Mammary epithelial cell (primary cell): ENCODE measurements at regions of chr17 and their contacts with region 1.

Region 1: GRCh38 chr17:49952209-49952911 is 16.6 kb upstream of the DLX4 start:
- DNase-seq: peak; percentile 66
- H3K4me3 ChIP-seq: no peak overlapping the region
- H3K27ac ChIP-seq: no peak overlapping the region
- H3K4me1 ChIP-seq: no peaks in the 10 kb centered on the region
- H3K27me3 ChIP-seq: peaks cover 4% of the 10 kb centered on the region
- CTCF ChIP-seq: peak; percentile 97 to 99

Region 2: DNA sequence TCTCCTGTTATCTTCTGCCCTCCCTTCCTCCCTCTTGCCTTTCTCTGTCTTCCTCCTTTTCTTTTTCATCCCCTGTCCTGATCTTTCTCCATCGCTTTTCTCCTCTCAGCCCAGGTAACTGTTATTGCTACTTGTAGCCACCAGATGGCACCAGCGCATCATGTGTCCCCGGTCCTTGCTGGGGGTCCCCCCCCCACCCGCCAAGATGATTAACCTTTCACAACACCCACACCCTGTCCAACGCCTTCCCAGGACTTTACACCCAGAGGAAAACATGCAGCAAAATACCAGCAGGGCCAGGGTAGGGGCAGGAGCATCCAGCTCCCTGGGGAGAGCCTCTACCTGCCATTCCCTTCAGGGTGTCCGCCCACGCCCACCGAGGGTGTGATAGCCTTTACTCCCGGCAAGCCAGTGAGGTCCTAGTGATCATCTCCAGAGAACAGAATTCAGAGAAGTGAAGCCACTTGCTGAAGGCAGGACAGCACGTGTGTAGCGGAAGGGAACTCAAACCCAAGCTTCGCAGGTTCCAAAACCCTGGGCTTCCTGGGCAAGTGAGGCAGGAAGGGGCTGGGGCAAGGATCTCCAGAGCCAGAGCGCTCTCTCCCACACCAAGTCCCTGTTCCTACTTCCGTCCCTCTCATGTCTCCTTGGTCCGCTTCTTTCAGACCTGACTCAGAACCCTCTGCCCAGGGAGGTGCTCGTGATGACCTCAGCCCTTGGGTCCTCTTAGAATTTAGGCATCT is 91.0 kb before region 1 on chr17:
- CTCF ChIA-PET with region 1: no interaction called
- dilution Hi-C with region 1: no loop called
- in situ Hi-C with region 1: no loop called
- intact Hi-C with region 1: loop called (anchors 1 kb)
- DNase-seq: peak; percentile 24
- H3K4me3 ChIP-seq: no peak overlapping the region
- H3K27ac ChIP-seq: no peak overlapping the region
- H3K4me1 ChIP-seq: no peaks in the 10 kb centered on the region
- H3K27me3 ChIP-seq: no peaks in the 10 kb centered on the region
- CTCF ChIP-seq: peak; percentile 73 to 91

Region 3: DNA sequence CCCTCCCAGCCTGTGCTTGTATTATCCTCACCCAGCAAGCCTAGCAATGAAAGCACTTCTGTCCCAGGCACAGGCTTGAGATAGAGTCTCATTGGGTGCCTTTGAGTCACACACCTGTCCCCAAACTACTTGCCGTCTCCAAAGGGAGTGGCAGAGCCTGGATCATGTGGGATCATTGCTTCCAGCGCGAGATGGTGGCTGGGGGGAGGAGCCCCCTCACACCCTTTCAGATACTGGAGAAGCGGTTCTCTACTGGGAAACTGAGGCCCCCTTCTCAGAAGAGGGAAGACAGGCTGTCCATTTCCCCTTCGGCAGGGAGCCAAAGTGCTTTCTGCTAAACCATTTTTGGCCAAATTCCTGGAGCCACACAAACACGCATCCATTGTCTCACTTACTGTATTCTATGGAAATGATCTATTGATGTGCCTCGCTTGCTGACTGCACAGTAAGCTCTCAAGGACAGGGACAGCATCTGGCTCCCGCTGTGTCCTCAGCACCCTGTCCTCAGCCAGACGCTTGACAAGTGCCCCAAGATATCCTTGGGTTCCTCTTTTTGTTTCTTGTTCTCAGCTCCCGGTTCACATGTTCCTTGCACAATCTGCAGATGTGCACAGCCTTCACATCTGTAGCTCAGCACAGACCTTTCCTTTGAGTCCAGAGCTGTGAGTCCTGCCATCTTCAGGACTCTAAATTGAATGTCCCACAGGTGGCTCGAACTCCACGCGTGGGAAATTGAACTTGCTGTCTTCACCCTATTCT is 68.7 kb after region 1 on chr17:
- CTCF ChIA-PET with region 1: no interaction called
- dilution Hi-C with region 1: no loop called
- in situ Hi-C with region 1: no loop called
- intact Hi-C with region 1: no loop called
- DNase-seq: no peak
- H3K4me3 ChIP-seq: no peak overlapping the region
- H3K27ac ChIP-seq: no peak overlapping the region
- H3K4me1 ChIP-seq: peaks cover 6% of the 10 kb centered on the region
- H3K27me3 ChIP-seq: no peaks in the 10 kb centered on the region
- CTCF ChIP-seq: no peak

Region 4: DNA sequence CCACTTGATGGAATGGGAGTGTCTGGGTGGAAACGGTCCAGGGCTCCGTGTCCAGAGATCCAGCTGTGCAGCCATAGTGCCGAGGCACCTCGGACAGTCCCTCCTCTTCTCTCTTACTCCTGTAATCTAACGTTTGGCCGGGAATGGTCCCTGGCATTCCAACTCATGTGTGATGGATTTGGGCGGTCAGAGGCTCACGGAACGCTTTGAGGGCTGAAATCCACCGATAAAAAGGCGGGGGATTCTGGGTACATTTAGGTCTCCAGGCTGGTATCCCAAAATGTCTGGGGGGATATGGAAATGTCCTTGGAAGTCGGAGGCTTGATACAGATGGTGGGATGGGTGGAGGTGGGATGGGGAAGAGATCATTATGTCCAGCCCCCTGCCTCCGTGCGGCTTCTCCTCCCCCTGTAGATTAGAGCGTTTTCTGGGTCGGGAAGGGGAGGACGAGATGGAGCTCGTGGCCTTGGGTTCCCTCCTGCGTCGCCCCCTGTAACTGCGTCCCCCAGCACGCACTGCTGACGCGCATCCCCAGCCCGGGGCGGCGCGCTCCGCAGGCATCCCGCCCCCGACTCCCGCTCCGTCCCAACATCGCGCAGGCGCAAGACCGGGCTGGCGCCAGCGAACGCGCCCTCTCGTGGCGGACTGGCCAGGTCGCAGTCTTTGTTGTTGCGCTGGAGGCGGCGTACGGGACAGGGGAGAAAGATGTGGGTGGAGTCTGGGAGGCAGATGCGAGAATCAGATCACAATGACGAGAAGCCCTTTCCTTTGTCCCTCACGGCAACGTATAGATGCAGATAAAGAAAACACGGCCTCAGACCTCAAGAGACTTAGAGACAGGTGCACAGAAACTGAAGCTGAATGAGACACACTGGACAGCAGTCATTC is 208.9 kb after region 1 on chr17:
- CTCF ChIA-PET with region 1: no interaction called
- dilution Hi-C with region 1: no loop called
- in situ Hi-C with region 1: no loop called
- intact Hi-C with region 1: no loop called
- DNase-seq: peak; percentile 81
- H3K4me3 ChIP-seq: peak overlapping the region; percentile 10 to 61 (median 55)
- H3K27ac ChIP-seq: no peak overlapping the region
- H3K4me1 ChIP-seq: peaks cover 12% of the 10 kb centered on the region
- H3K27me3 ChIP-seq: no peaks in the 10 kb centered on the region
- CTCF ChIP-seq: peak; percentile 84 to 96